Activated CD8-positive, alpha-beta memory T cell treated with anti-CD3 and anti-CD28 coated beads, Interleukin-2, amount 10 ng/mL, durations not matched to agents 7 days and 5 days (primary cell): ENCODE measurements at regions of chr6 and their contacts with region 1.

Region 1: DNA sequence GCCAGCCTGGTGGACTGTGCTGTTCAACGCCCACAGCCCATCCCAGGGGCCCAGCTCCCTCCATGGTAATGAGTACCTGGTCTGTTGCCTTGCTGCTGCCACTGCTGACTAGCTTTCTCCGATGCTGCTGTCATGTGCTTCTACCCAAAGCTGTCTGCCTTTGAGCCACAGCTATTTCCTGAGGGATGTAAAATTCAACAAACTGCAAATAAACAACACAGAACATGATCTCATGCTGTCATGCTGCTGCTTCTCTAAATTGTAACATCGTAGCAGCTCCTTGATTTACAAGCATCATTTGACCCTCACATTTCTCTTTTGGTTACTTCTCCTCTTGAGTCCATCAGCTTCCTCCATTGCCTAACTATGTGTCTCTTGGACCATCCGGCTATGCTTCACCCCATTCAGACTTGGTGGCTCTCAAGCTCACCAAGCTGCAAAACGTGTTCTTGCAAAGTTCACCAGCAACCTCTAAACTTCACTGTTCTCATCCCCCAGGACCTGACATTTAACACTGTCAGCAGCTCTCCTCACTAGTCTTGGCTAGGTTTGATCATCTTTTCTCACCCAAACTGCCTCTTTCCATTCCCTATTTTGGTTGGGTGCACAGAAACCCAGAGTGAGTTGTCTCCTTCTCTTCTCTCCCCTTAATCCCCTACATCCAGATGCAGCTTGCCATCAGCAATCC is 54.6 kb downstream of the FYN start:
- DNase-seq: peak; percentile 68
- ATAC-seq: peak; percentile 72
- H3K4me3 Mint-ChIP-seq: peak overlapping the region; percentile 34
- H3K27ac Mint-ChIP-seq: peak overlapping the region; percentile 83
- H3K4me1 Mint-ChIP-seq: peaks cover 72% of the 10 kb centered on the region
- H3K27me3 Mint-ChIP-seq: no peaks in the 10 kb centered on the region

Region 2: GRCh38 chr6:111646942-111647341 is 171.7 kb before region 1 on chr6:
- CTCF ChIA-PET with region 1: no interaction called
- DNase-seq: no peak
- ATAC-seq: no peak
- H3K4me3 Mint-ChIP-seq: no peak overlapping the region
- H3K27ac Mint-ChIP-seq: no peak overlapping the region
- H3K4me1 Mint-ChIP-seq: no peaks in the 10 kb centered on the region
- H3K27me3 Mint-ChIP-seq: no peaks in the 10 kb centered on the region

Region 3: GRCh38 chr6:111789598-111789997 is 29.1 kb before region 1 on chr6:
- CTCF ChIA-PET with region 1: no interaction called
- DNase-seq: no peak
- ATAC-seq: no peak
- H3K4me3 Mint-ChIP-seq: no peak overlapping the region
- H3K27ac Mint-ChIP-seq: no peak overlapping the region
- H3K4me1 Mint-ChIP-seq: peaks cover 56% of the 10 kb centered on the region
- H3K27me3 Mint-ChIP-seq: no peaks in the 10 kb centered on the region

Region 4: DNA sequence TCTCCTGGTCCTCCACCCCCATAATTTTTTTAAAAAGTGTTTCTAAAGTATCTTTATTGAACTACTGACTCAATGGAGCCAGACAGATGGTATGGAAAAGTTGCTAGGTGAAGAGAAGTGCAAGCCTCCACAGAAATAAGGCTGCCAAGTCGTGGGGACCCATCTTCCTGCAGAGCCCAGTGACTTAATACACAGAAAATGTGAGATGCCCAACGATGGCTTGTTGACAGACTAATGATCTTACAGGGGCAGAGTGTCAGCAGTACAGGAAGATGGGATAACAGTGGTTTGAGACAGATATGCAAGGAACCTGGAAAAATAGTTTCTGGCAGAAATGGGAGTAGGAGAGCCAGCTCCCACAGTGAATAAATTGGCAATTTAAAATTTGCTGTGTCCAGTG is 11.3 kb after region 1 on chr6:
- CTCF ChIA-PET with region 1: interaction called, 32 read pairs
- DNase-seq: no peak
- ATAC-seq: no peak
- H3K4me3 Mint-ChIP-seq: no peak overlapping the region
- H3K27ac Mint-ChIP-seq: no peak overlapping the region
- H3K4me1 Mint-ChIP-seq: peaks cover 77% of the 10 kb centered on the region
- H3K27me3 Mint-ChIP-seq: no peaks in the 10 kb centered on the region

Region 5: GRCh38 chr6:111875741-111876140 is 57.1 kb after region 1 on chr6:
- CTCF ChIA-PET with region 1: no interaction called
- DNase-seq: no peak
- ATAC-seq: no peak
- H3K4me3 Mint-ChIP-seq: no peak overlapping the region
- H3K27ac Mint-ChIP-seq: no peak overlapping the region
- H3K4me1 Mint-ChIP-seq: peaks cover 16% of the 10 kb centered on the region
- H3K27me3 Mint-ChIP-seq: no peaks in the 10 kb centered on the region